ENCODE measurements at regions of chr21 and their contacts with region 1.

Region 1: DNA sequence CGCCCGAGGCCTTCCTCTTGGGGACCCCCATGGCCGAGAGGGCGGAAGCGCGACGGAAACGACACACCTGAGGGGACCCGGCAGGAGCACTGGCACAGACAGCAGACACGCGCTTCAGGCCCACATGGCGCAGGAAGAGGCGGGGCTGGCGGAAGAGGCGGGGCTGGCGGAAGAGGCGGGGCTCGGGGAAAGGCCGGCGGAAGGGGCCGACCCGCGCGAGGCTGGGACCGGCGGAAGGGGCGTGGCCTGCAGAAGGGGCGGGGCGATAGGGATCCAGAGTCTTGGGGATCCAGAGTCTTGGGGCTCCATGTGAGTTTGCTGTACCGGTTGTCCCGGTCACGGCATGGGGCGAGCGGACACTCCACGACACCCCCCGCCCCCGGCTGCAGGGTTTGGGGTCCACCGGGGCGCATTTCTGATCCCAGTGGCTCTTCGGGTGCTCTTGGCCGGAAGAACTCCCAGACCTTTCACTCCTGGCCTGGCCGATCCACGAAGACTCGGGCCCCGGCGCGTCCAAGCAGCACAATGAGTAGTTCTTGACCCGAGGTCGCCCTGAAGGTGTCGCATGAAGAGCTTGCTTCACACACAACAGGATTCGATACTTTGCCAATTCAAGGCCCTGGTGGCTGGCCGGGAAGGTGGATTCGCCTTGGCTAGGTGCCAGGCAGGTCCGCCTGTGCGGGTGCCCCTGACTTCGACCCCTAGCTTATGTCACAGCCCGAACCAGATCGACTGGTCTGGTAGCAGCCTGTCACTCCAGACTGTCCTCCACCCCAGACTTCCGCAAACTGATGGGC is at the start of gene URB1:
- DNase-seq: peak; percentile 91
- H3K4me3 Mint-ChIP-seq: peak within 1 kb of the TSS; percentile 87
- H3K27ac Mint-ChIP-seq: peak within 1 kb of the TSS; percentile 84
- H3K4me1 Mint-ChIP-seq: peaks cover 36% of the 10 kb centered on the region
- H3K27me3 Mint-ChIP-seq: peaks cover 7% of the 10 kb centered on the region
- total RNA-seq, gene URB1: 32.3 and 33.9 TPM in 2 replicates

Region 2: GRCh38 chr21:31731802-31732596 is 661.1 kb before region 1 on chr21 and contains the start of gene SCAF4:
- intact Hi-C with region 1: loop called (anchors 2 kb)
- DNase-seq: peak; percentile 74
- H3K4me3 Mint-ChIP-seq: peak within 1 kb of the TSS; percentile 86
- H3K27ac Mint-ChIP-seq: peak within 1 kb of the TSS; percentile 72
- H3K4me1 Mint-ChIP-seq: peaks cover 10% of the 10 kb centered on the region
- H3K27me3 Mint-ChIP-seq: no peaks in the 10 kb centered on the region
- total RNA-seq, gene SCAF4: 55.8 and 60.1 TPM in 2 replicates

Region 3: DNA sequence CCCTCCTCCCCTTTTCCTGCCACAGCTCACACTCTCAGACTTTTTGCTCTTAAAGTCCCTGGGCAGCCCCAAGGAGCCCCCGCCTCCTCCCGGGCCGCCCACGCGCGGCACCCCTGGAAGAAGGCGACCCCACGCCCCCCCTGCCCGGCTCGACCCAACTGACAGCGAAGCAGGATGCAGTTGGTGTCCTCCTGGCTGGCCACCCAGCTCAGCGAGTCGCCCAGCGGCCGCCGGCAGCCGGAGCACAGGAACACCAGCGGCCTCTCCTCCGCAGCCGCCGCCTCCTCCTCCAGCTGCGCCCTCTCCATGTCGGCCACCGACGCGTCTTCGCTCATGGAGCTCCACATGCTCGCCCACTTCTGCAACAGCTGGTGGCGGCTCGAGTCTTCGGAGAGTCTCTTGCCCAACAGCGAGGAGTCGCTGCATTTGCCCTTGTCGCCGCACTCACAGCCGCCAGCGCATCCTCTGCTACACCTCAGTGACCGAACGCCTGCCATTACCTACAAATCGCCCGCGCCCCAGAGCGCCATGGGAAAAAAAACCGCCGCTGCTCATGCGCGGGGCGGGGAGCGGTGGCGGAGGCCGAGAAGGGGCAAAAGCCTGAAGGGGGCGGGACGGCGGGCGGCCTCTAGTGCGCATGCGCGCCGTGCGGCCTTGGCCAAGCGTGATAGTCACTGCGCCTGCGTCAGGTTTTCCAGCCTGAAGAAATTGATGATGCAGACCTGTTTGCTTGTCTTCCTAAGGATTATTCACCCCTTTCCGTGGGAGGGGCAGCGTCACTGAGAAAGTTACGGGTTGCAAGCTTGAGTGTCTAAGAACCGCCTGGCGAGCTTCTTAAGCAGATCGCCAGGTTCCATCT is 114.3 kb before region 1 on chr21 and contains the start of gene MIS18A:
- intact Hi-C with region 1: loop called (anchors 2 kb)
- DNase-seq: peak; percentile 95
- H3K4me3 Mint-ChIP-seq: peak within 1 kb of the TSS; percentile 99
- H3K27ac Mint-ChIP-seq: peak within 1 kb of the TSS; percentile 97
- H3K4me1 Mint-ChIP-seq: peaks cover 27% of the 10 kb centered on the region
- H3K27me3 Mint-ChIP-seq: no peaks in the 10 kb centered on the region
- total RNA-seq, gene MIS18A: 25.0 and 26.3 TPM in 2 replicates

Region 4: GRCh38 chr21:32569261-32570230 is 176.5 kb after region 1 on chr21:
- intact Hi-C with region 1: loop called (anchors 1 kb)
- DNase-seq: peak; percentile 70
- H3K4me3 Mint-ChIP-seq: peak overlapping the region; percentile 86
- H3K27ac Mint-ChIP-seq: peak overlapping the region; percentile 19
- H3K4me1 Mint-ChIP-seq: peaks cover 16% of the 10 kb centered on the region
- H3K27me3 Mint-ChIP-seq: peaks cover 10% of the 10 kb centered on the region

Region 5: GRCh38 chr21:32612075-32612998 is 219.3 kb after region 1 on chr21 and contains the start of gene CFAP298:
- intact Hi-C with region 1: loop called (anchors 5 kb)
- DNase-seq: peak; percentile 86
- H3K4me3 Mint-ChIP-seq: peak within 1 kb of the TSS; percentile 99
- H3K27ac Mint-ChIP-seq: peak within 1 kb of the TSS; percentile 89
- H3K4me1 Mint-ChIP-seq: peaks cover 4% of the 10 kb centered on the region
- H3K27me3 Mint-ChIP-seq: peaks cover 2% of the 10 kb centered on the region
- total RNA-seq, gene CFAP298: 44.5 and 48.6 TPM in 2 replicates

Region 6: GRCh38 chr21:32727687-32728455 is 334.8 kb after region 1 on chr21 and contains the start of gene SYNJ1:
- intact Hi-C with region 1: loop called (anchors 5 kb)
- DNase-seq: peak; percentile 93
- H3K4me3 Mint-ChIP-seq: peak within 1 kb of the TSS; percentile 98
- H3K27ac Mint-ChIP-seq: peak within 1 kb of the TSS; percentile 95
- H3K4me1 Mint-ChIP-seq: peaks cover 40% of the 10 kb centered on the region
- H3K27me3 Mint-ChIP-seq: no peaks in the 10 kb centered on the region
- total RNA-seq, gene SYNJ1: 11.8 and 16.5 TPM in 2 replicates

Region 7: GRCh38 chr21:33089398-33090119 is 696.5 kb after region 1 on chr21:
- intact Hi-C with region 1: no loop called
- DNase-seq: no peak
- H3K4me3 Mint-ChIP-seq: no peak overlapping the region
- H3K27ac Mint-ChIP-seq: no peak overlapping the region
- H3K4me1 Mint-ChIP-seq: no peaks in the 10 kb centered on the region
- H3K27me3 Mint-ChIP-seq: peaks cover 12% of the 10 kb centered on the region